Activated B cell treated with CpG ODN at 0.5 μM for 24 hours (primary cell): ENCODE measurements at regions of chr16 and their contacts with region 1.

Region 1: GRCh38 chr16:81873843-81874752 is 95.0 kb downstream of the PLCG2 start:
- DNase-seq: peak; percentile 45
- ATAC-seq: peak; percentile 91
- H3K4me3 Mint-ChIP-seq: no peak overlapping the region
- H3K27ac Mint-ChIP-seq: peak overlapping the region; percentile 66
- H3K4me1 Mint-ChIP-seq: peaks cover 41% of the 10 kb centered on the region
- H3K27me3 Mint-ChIP-seq: no peaks in the 10 kb centered on the region
- CTCF ChIP-seq: no peak

Region 2: GRCh38 chr16:81366316-81366932 is 507.7 kb before region 1 on chr16:
- CTCF ChIA-PET with region 1: interaction called, 4 read pairs
- POLR2A ChIA-PET with region 1: no interaction called
- intact Hi-C with region 1: loop called (anchors 1 kb)
- DNase-seq: no peak
- ATAC-seq: peak; percentile 82
- H3K4me3 Mint-ChIP-seq: no peak overlapping the region
- H3K27ac Mint-ChIP-seq: no peak overlapping the region
- H3K4me1 Mint-ChIP-seq: no peaks in the 10 kb centered on the region
- H3K27me3 Mint-ChIP-seq: no peaks in the 10 kb centered on the region
- CTCF ChIP-seq: no peak

Region 3: GRCh38 chr16:81730090-81731051 is 143.7 kb before region 1 on chr16:
- CTCF ChIA-PET with region 1: interaction called, 56 read pairs
- POLR2A ChIA-PET with region 1: interaction called, 3 read pairs
- intact Hi-C with region 1: loop called (anchors 1 kb)
- DNase-seq: peak; percentile 65
- ATAC-seq: peak; percentile 95
- H3K4me3 Mint-ChIP-seq: peak overlapping the region; percentile 85
- H3K27ac Mint-ChIP-seq: peak overlapping the region; percentile 86
- H3K4me1 Mint-ChIP-seq: peaks cover 31% of the 10 kb centered on the region
- H3K27me3 Mint-ChIP-seq: no peaks in the 10 kb centered on the region
- CTCF ChIP-seq: no peak

Region 4: GRCh38 chr16:81778861-81779535 is 95.1 kb before region 1 on chr16 and contains the start of gene PLCG2:
- CTCF ChIA-PET with region 1: interaction called, 10 read pairs
- POLR2A ChIA-PET with region 1: interaction called, 9 read pairs
- intact Hi-C with region 1: loop called (anchors 1 kb)
- DNase-seq: peak; percentile 92
- ATAC-seq: peak; percentile 83
- H3K4me3 Mint-ChIP-seq: peak within 1 kb of the TSS; percentile 97
- H3K27ac Mint-ChIP-seq: peak within 1 kb of the TSS; percentile 91
- H3K4me1 Mint-ChIP-seq: peaks cover 71% of the 10 kb centered on the region
- H3K27me3 Mint-ChIP-seq: no peaks in the 10 kb centered on the region
- CTCF ChIP-seq: no peak
- total RNA-seq, gene PLCG2: 449 and 525 TPM in 2 replicates

Region 5: GRCh38 chr16:81808933-81809496 is 65.1 kb before region 1 on chr16:
- CTCF ChIA-PET with region 1: interaction called, 7 read pairs
- POLR2A ChIA-PET with region 1: interaction called, 10 read pairs
- intact Hi-C with region 1: no loop called
- DNase-seq: peak; percentile 56
- ATAC-seq: peak; percentile 79
- H3K4me3 Mint-ChIP-seq: peak overlapping the region; percentile 65
- H3K27ac Mint-ChIP-seq: peak overlapping the region; percentile 92
- H3K4me1 Mint-ChIP-seq: peaks cover 98% of the 10 kb centered on the region
- H3K27me3 Mint-ChIP-seq: no peaks in the 10 kb centered on the region
- CTCF ChIP-seq: no peak

Region 6: GRCh38 chr16:81838794-81839193 is 35.3 kb before region 1 on chr16:
- CTCF ChIA-PET with region 1: interaction called, 6 read pairs
- POLR2A ChIA-PET with region 1: interaction called, 11 read pairs
- intact Hi-C with region 1: loop called (anchors 2 kb)
- DNase-seq: no peak
- ATAC-seq: peak; percentile 38
- H3K4me3 Mint-ChIP-seq: peak overlapping the region; percentile 73
- H3K27ac Mint-ChIP-seq: peak overlapping the region; percentile 93
- H3K4me1 Mint-ChIP-seq: peaks cover 96% of the 10 kb centered on the region
- H3K27me3 Mint-ChIP-seq: no peaks in the 10 kb centered on the region
- CTCF ChIP-seq: no peak

Region 7: GRCh38 chr16:81885976-81886586 is 12.0 kb after region 1 on chr16:
- CTCF ChIA-PET with region 1: interaction called, 40 read pairs
- POLR2A ChIA-PET with region 1: no interaction called
- intact Hi-C with region 1: no loop called
- DNase-seq: no peak
- ATAC-seq: peak; percentile 81
- H3K4me3 Mint-ChIP-seq: no peak overlapping the region
- H3K27ac Mint-ChIP-seq: no peak overlapping the region
- H3K4me1 Mint-ChIP-seq: no peaks in the 10 kb centered on the region
- H3K27me3 Mint-ChIP-seq: no peaks in the 10 kb centered on the region
- CTCF ChIP-seq: peak; percentile 46